ENCODE measurements at regions of chr19 and their contacts with region 1.

Region 1: GRCh38 chr19:38877781-38878574 is at the start of gene RINL:
- DNase-seq: peak; percentile 45 to 86 (median 73)
- ATAC-seq: peak; percentile 96
- H3K4me3 ChIP-seq: peak within 1 kb of the TSS; percentile 58
- H3K4me3 Mint-ChIP-seq: peak within 1 kb of the TSS; percentile 91
- H3K27ac ChIP-seq: peak within 1 kb of the TSS; percentile 90 to 96
- H3K27ac Mint-ChIP-seq: peak within 1 kb of the TSS; percentile 97
- H3K4me1 ChIP-seq: peaks cover 55% of the 10 kb centered on the region
- H3K4me1 Mint-ChIP-seq: peaks cover 38% of the 10 kb centered on the region
- H3K27me3 ChIP-seq: no peaks in the 10 kb centered on the region
- H3K27me3 Mint-ChIP-seq: no peaks in the 10 kb centered on the region
- CTCF ChIP-seq: no peak
- total RNA-seq, gene RINL: 19.5 to 21.3 TPM

Region 2: DNA sequence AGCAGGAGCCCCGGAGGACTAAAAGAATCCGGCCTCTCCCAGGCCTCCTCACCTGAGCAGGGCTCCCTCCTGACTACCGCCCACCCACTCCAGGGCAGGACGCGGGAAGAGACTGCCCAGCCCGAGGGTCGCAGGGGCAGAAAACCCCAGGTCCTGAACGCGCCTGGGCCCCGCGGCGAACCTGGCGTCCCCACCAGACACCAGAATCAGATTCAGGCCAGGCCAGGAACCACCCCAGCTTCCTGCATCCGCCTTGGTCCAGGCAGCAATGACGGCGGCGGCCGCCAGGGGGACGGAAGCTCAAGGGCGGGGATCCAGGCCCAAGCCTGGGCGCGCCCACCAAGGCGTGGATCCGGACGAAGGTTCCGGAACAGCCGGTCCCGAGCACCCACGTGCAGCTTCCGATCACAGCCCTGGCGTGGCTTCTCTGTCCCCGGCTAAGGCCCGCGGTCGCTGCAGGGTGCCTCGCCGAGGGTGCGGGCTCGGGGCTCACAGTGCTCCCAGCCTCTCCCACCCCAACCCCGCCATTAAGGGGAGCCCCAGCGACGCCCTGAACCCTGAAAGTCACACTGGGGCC is 108.3 kb before region 1 on chr19:
- CTCF ChIA-PET with region 1: interaction called, 4 read pairs
- POLR2A ChIA-PET with region 1: interaction called, 11 read pairs
- intact Hi-C with region 1: loop called in 1 of 2 experiments (anchors 5 kb)
- DNase-seq: peak; percentile 83 to 94 (median 92)
- ATAC-seq: peak; percentile 88
- H3K4me3 ChIP-seq: peak overlapping the region; percentile 48
- H3K4me3 Mint-ChIP-seq: peak overlapping the region; percentile 47
- H3K27ac ChIP-seq: peak overlapping the region in 1 of 2 donors; percentile 57
- H3K27ac Mint-ChIP-seq: peak overlapping the region; percentile 65
- H3K4me1 ChIP-seq: peaks cover 14% of the 10 kb centered on the region
- H3K4me1 Mint-ChIP-seq: peaks cover 7% of the 10 kb centered on the region
- H3K27me3 ChIP-seq: no peaks in the 10 kb centered on the region
- H3K27me3 Mint-ChIP-seq: no peaks in the 10 kb centered on the region
- CTCF ChIP-seq: peak; percentile 94

Region 3: GRCh38 chr19:38838573-38839269 is 39.3 kb before region 1 on chr19:
- CTCF ChIA-PET with region 1: no interaction called
- POLR2A ChIA-PET with region 1: interaction called, 14 read pairs
- intact Hi-C with region 1: loop called in 1 of 2 experiments (anchors 5 kb)
- DNase-seq: peak in 5 of 14 experiments; percentile 29 to 60 (median 33)
- ATAC-seq: no peak
- H3K4me3 ChIP-seq: no peak overlapping the region
- H3K4me3 Mint-ChIP-seq: no peak overlapping the region
- H3K27ac ChIP-seq: no peak overlapping the region
- H3K27ac Mint-ChIP-seq: peak overlapping the region; percentile 55
- H3K4me1 ChIP-seq: peaks cover 42% of the 10 kb centered on the region
- H3K4me1 Mint-ChIP-seq: peaks cover 39% of the 10 kb centered on the region
- H3K27me3 ChIP-seq: no peaks in the 10 kb centered on the region
- H3K27me3 Mint-ChIP-seq: peaks cover 5% of the 10 kb centered on the region
- CTCF ChIP-seq: no peak

Region 4: GRCh38 chr19:38856813-38857212 is 21.2 kb before region 1 on chr19:
- CTCF ChIA-PET with region 1: no interaction called
- POLR2A ChIA-PET with region 1: interaction called, 27 read pairs
- intact Hi-C with region 1: no loop called
- DNase-seq: no peak
- ATAC-seq: no peak
- H3K4me3 ChIP-seq: no peak overlapping the region
- H3K4me3 Mint-ChIP-seq: peak overlapping the region; percentile 56
- H3K27ac ChIP-seq: peak overlapping the region in 1 of 2 donors; percentile 52
- H3K27ac Mint-ChIP-seq: peak overlapping the region; percentile 80
- H3K4me1 ChIP-seq: peaks cover 29% of the 10 kb centered on the region
- H3K4me1 Mint-ChIP-seq: peaks cover 26% of the 10 kb centered on the region
- H3K27me3 ChIP-seq: no peaks in the 10 kb centered on the region
- H3K27me3 Mint-ChIP-seq: no peaks in the 10 kb centered on the region
- CTCF ChIP-seq: no peak

Region 5: DNA sequence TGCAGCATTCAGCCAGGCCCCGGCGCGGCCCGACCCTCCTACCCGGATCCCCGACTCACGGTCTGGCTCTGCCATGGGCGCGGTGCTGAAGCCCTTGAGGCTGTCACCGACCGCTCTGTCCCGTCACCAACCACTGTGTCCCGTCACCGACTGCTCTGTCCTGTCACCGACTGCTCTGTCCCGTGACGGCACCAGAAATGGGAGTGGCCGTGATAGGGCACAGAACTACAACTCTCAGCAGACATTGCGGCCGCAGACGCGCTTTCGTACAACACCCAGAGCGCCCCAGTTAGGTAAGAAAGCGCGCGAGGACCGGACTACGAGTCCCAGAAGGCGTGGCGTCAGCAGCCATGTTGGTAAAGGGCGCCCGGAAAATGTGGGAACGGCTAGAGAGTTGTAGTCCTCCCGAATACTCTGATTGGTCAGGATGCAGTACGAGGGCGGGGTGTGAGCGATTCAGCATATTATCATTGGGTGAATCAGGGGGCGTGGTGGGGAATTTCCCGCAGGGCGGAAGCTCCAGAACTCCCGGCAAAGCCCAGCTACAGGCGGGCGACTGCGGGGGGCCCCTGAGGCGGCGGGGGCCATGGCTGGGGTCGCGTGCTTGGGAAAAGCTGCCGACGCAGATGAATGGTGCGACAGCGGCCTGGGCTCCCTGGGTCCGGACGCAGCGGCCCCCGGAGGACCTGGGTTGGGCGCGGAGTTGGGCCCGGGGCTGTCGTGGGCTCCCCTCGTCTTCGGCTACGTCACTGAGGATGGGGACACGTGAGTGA is 21.7 kb after region 1 on chr19 and contains the starts of genes NFKBIB and SIRT2:
- CTCF ChIA-PET with region 1: interaction called, 3 read pairs
- POLR2A ChIA-PET with region 1: interaction called, 5 read pairs
- intact Hi-C with region 1: loop called (anchors 1 to 2 kb)
- DNase-seq: peak; percentile 97 to 100 (median 99)
- ATAC-seq: peak; percentile 86
- H3K4me3 ChIP-seq: peak within 1 kb of the TSS; percentile 97
- H3K4me3 Mint-ChIP-seq: peak within 1 kb of the TSS; percentile 93
- H3K27ac ChIP-seq: peak within 1 kb of the TSS; percentile 97 to 99
- H3K27ac Mint-ChIP-seq: peak within 1 kb of the TSS; percentile 89
- H3K4me1 ChIP-seq: peaks cover 49% of the 10 kb centered on the region
- H3K4me1 Mint-ChIP-seq: peaks cover 47% of the 10 kb centered on the region
- H3K27me3 ChIP-seq: no peaks in the 10 kb centered on the region
- H3K27me3 Mint-ChIP-seq: no peaks in the 10 kb centered on the region
- CTCF ChIP-seq: no peak
- total RNA-seq, gene NFKBIB: 29.3 to 30.1 TPM
- total RNA-seq, gene SIRT2: 60.8 to 67.8 TPM